MCF 10A (cell line): ENCODE measurements at regions of chr1 and their contacts with region 1.

Region 1: DNA sequence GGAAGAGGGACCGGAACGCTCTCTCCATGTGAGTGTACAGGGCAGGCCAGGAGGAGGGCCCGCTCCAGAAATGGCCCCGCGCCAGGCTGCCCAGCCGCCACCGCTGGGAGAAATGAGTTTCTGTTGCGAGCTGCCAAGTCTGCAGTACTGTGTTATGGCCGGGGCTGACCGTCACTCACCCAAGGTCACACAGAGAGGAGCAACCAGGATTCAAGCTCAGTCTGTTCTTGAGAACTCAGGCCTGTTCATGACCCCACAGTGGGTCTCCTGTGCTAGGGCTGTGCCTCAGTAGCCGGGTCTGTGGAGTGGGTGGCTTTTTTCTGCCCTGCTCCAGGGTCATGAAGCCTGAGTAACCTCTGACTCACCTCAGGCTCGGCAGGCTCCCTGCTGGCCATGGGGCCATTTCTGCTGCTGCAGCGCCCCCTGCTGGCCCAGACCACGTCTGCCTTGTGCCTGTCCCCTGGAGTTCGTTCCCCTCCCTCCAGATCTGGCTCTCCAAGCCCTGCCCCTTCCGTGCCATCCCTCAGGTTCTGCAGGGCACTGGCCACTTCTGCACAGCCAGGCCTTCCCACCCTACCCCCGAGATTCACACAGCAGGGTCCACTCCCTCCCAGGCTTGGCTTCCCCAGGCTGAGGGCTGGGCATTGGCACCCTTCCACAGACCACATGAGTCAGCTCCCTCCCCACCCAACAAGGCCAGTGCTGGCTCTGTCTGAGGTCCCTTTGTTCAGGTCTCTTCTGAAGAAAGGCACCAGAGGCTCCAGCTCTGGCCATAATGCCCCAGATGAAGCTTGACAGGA is 51.8 kb downstream of the EDN2 start:
- DNase-seq: peak; percentile 91
- H3K4me3 Mint-ChIP-seq: peak overlapping the region; percentile 54
- H3K27ac Mint-ChIP-seq: no peak overlapping the region
- H3K4me1 Mint-ChIP-seq: peaks cover 29% of the 10 kb centered on the region
- H3K27me3 Mint-ChIP-seq: no peaks in the 10 kb centered on the region
- CTCF ChIP-seq: peak; percentile 94

Region 2: GRCh38 chr1:41045740-41046139 is 386.9 kb before region 1 on chr1:
- CTCF ChIA-PET with region 1: no interaction called
- POLR2A ChIA-PET with region 1: no interaction called
- intact Hi-C with region 1: loop called (anchors 10 kb)
- DNase-seq: peak; percentile 95
- H3K4me3 Mint-ChIP-seq: peak overlapping the region; percentile 44
- H3K27ac Mint-ChIP-seq: peak overlapping the region; percentile 97
- H3K4me1 Mint-ChIP-seq: peaks cover 35% of the 10 kb centered on the region
- H3K27me3 Mint-ChIP-seq: no peaks in the 10 kb centered on the region
- CTCF ChIP-seq: no peak

Region 3: DNA sequence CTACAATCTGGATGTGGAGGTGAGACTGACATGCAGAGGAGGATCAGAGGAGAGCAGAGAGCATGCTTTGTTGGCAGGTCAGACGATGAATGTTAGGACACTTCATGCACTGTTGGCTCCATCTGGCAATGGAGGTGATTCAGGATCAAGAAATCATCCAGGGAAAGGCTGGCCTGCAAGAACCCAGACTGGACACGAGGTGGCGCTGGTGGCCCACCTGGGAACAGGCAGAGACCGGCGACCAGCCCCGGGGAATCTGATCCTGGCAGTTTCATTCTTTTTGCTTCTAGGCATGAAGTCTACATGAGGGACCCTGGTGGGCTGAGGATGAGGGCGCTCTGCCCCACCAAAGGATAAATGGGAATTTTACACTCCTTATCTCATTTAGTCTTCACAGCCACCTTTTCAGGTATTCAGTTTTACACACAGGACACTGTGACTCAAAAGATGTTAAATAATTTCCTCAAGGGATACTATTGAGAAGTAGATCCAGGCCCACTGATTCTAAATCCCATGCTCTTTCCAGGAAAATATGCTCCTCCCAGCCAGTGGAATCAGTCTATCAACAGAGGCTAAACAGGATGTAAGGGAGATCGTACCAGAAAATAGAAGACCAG is 164.4 kb before region 1 on chr1:
- CTCF ChIA-PET with region 1: interaction called, 11 read pairs
- POLR2A ChIA-PET with region 1: interaction called, 3 read pairs
- intact Hi-C with region 1: loop called (anchors 1 kb)
- DNase-seq: peak; percentile 72
- H3K4me3 Mint-ChIP-seq: no peak overlapping the region
- H3K27ac Mint-ChIP-seq: no peak overlapping the region
- H3K4me1 Mint-ChIP-seq: peaks cover 6% of the 10 kb centered on the region
- H3K27me3 Mint-ChIP-seq: no peaks in the 10 kb centered on the region
- CTCF ChIP-seq: peak; percentile 93

Region 4: GRCh38 chr1:41322835-41323627 is 109.7 kb before region 1 on chr1:
- CTCF ChIA-PET with region 1: interaction called, 11 read pairs
- POLR2A ChIA-PET with region 1: no interaction called
- intact Hi-C with region 1: loop called (anchors 1 kb)
- DNase-seq: peak; percentile 62
- H3K4me3 Mint-ChIP-seq: no peak overlapping the region
- H3K27ac Mint-ChIP-seq: no peak overlapping the region
- H3K4me1 Mint-ChIP-seq: no peaks in the 10 kb centered on the region
- H3K27me3 Mint-ChIP-seq: no peaks in the 10 kb centered on the region
- CTCF ChIP-seq: peak; percentile 31

Region 5: GRCh38 chr1:41416552-41417334 is 15.9 kb before region 1 on chr1:
- CTCF ChIA-PET with region 1: interaction called, 61 read pairs
- POLR2A ChIA-PET with region 1: interaction called, 18 read pairs
- intact Hi-C with region 1: loop called (anchors 1 kb)
- DNase-seq: peak; percentile 74
- H3K4me3 Mint-ChIP-seq: no peak overlapping the region
- H3K27ac Mint-ChIP-seq: peak overlapping the region; percentile 42
- H3K4me1 Mint-ChIP-seq: peaks cover 31% of the 10 kb centered on the region
- H3K27me3 Mint-ChIP-seq: no peaks in the 10 kb centered on the region
- CTCF ChIP-seq: peak; percentile 88

Region 6: DNA sequence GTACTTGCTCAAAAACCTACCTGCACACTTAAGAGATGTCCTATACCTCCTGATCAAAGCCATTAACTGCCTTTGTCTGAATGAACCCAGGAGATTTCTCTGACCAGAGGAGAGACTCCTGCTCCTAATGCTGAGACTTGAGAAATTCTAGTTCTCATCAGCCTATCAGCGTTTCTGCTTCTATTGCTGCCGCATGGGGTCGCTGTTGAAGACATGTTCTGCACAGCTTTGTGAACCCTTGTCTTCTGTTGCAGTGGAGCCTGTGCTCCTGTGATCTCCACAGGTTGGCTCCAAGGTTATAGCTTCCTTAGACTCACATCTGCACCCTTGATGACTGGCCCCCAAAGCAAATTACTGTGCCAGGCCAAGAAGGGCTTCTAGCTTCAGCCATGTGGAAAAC is 11.6 kb after region 1 on chr1:
- CTCF ChIA-PET with region 1: interaction called, 11 read pairs
- POLR2A ChIA-PET with region 1: interaction called, 3 read pairs
- intact Hi-C with region 1: no loop called
- DNase-seq: no peak
- H3K4me3 Mint-ChIP-seq: no peak overlapping the region
- H3K27ac Mint-ChIP-seq: no peak overlapping the region
- H3K4me1 Mint-ChIP-seq: peaks cover 20% of the 10 kb centered on the region
- H3K27me3 Mint-ChIP-seq: no peaks in the 10 kb centered on the region
- CTCF ChIP-seq: no peak

Region 7: DNA sequence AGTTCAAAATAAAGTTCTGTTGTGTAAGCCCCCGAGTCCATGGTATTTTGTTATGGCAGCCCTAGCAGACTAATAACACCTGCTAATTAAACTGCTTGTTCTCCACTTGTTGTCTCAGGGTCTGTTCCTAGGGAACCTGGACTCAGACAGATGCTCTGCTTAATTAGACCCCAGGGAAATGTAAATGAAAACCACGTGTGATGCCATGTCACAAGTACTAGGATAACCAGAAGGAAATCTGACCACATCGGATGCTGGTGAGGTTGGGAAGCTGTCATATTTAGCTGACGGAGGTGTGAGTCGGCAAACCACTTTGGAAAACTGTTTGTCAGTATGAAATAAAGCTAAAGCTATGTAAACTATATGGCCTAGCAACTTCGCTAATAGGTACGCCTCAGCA is 32.2 kb after region 1 on chr1:
- CTCF ChIA-PET with region 1: interaction called, 9 read pairs
- POLR2A ChIA-PET with region 1: interaction called, 11 read pairs
- intact Hi-C with region 1: no loop called
- DNase-seq: no peak
- H3K4me3 Mint-ChIP-seq: no peak overlapping the region
- H3K27ac Mint-ChIP-seq: no peak overlapping the region
- H3K4me1 Mint-ChIP-seq: peaks cover 21% of the 10 kb centered on the region
- H3K27me3 Mint-ChIP-seq: no peaks in the 10 kb centered on the region
- CTCF ChIP-seq: no peak